Ovary (tissue), 10 donors: ENCODE measurements at regions of chr20 and their contacts with region 1.

Region 1: GRCh38 chr20:22684072-22684762 is 99.8 kb upstream of the FOXA2 start:
- DNase-seq: peak in 4 of 5 donors; percentile 28 to 59 (median 58)
- H3K4me3 ChIP-seq: no peak overlapping the region
- H3K27ac ChIP-seq: no peak overlapping the region
- H3K4me1 ChIP-seq: no peaks in the 10 kb centered on the region
- H3K27me3 ChIP-seq: no peaks in the 10 kb centered on the region
- CTCF ChIP-seq: peak; percentile 47 to 59 (median 52)
- EP300 ChIP-seq: no peak
- POLR2A ChIP-seq: no peak

Region 2: DNA sequence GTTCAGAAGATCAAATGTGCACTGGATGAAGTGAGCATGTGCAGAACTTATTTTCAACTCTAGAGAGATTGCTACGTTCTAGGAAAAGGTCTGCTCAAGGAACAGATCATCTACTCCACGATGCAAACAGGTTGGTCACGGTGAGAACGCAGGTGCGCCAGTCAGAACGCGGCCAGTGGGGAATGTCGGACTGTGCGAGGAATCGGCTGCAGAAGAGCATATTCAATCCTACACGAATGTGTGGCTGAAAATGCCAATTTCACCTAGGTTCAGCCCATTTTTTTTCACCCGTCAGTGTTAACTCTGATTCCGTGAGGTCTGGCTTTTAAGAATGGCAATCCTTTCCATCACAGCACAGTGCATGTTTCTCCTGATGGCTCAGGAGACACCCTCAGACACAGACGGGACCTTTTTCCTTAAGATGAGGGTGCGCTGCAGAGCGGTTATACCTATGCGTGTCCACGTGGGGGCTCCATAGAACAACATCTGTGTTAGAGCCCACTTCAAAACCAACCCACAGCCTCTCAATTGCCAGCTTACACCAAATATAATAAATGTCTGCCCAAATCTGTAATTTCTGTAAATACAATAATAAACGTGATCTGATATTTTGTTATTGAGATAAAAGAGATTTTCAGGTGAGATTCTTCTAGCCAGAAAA is 350.2 kb before region 1 on chr20:
- intact Hi-C with region 1: loop called in 2 of 4 experiments (anchors 10 kb)
- DNase-seq: peak in 2 of 5 donors; percentile 21 to 27
- H3K4me3 ChIP-seq: no peak overlapping the region
- H3K27ac ChIP-seq: no peak overlapping the region
- H3K4me1 ChIP-seq: no peaks in the 10 kb centered on the region
- H3K27me3 ChIP-seq: no peaks in the 10 kb centered on the region
- CTCF ChIP-seq: no peak
- EP300 ChIP-seq: no peak
- POLR2A ChIP-seq: no peak

Region 3: DNA sequence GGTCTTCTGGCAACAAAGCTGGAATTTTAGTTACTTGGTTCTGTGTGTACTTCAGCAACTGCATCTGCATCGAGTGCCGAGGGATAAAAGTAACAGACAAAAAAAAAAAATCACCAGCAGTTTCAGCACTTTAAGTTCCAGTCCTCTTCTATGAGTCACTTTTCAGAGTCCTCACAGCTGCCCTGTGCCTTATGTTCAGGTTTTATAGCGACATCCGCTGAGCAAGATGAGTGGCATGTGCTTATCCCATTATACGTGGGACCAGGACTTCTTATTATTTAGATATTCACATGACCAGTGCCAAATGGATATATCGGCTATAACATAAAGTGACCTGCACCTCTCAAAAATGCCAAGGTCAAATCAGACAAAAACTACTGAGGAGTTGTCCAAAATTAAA is 342.7 kb before region 1 on chr20:
- intact Hi-C with region 1: loop called in 3 of 4 experiments (anchors 5 to 10 kb)
- DNase-seq: no peak
- H3K4me3 ChIP-seq: no peak overlapping the region
- H3K27ac ChIP-seq: no peak overlapping the region
- H3K4me1 ChIP-seq: no peaks in the 10 kb centered on the region
- H3K27me3 ChIP-seq: no peaks in the 10 kb centered on the region
- CTCF ChIP-seq: no peak
- EP300 ChIP-seq: no peak
- POLR2A ChIP-seq: no peak

Region 4: DNA sequence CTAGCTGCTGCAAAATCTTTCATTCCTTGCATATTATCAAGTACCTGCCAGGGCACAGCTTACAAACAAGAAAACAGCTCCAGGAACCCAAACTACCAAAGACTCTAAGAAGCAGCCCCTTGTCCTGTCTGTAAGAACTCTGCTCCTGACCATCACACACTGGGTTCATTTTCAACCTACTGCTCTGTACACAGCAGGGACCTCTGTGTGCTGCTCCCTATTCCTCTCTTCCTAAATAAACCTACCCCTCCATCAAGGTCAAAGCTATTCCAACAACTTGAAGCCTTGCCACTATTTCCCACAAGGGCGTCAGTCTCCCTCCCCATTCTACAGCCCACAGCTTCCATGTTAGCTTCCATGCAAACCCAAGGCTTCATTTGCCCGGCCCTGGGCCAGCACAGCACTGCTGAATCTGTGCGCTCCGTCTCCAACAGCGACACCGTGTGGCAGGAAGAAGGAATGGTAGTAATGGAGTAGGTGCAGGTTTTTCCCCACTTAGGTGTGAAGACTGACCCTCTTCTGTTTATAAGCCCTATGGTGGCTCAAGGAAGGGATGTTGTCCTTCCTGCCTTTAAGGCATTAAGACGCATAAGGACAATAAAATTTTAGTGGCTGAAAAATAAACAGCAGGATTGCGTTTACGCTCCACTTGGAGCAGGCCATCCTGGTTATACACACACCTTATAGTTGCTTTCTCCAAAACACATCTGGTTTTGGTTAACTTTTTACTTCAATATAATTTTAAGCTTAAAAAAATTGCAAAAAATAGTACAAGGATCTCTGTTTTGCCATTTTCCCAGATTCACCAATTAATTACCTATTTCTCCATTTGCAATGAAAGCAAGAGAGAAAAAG is 551.2 kb after region 1 on chr20:
- intact Hi-C with region 1: loop called in 1 of 4 experiments (anchors 5 kb)
- DNase-seq: peak; percentile 76 to 83 (median 79)
- H3K4me3 ChIP-seq: no peak overlapping the region
- H3K27ac ChIP-seq: no peak overlapping the region
- H3K4me1 ChIP-seq: peaks cover 8% of the 10 kb centered on the region
- H3K27me3 ChIP-seq: no peaks in the 10 kb centered on the region
- CTCF ChIP-seq: peak; percentile 60 to 80 (median 71)
- EP300 ChIP-seq: no peak
- POLR2A ChIP-seq: no peak